ENCODE measurements at regions of chr5 and their contacts with region 1.

Region 1: DNA sequence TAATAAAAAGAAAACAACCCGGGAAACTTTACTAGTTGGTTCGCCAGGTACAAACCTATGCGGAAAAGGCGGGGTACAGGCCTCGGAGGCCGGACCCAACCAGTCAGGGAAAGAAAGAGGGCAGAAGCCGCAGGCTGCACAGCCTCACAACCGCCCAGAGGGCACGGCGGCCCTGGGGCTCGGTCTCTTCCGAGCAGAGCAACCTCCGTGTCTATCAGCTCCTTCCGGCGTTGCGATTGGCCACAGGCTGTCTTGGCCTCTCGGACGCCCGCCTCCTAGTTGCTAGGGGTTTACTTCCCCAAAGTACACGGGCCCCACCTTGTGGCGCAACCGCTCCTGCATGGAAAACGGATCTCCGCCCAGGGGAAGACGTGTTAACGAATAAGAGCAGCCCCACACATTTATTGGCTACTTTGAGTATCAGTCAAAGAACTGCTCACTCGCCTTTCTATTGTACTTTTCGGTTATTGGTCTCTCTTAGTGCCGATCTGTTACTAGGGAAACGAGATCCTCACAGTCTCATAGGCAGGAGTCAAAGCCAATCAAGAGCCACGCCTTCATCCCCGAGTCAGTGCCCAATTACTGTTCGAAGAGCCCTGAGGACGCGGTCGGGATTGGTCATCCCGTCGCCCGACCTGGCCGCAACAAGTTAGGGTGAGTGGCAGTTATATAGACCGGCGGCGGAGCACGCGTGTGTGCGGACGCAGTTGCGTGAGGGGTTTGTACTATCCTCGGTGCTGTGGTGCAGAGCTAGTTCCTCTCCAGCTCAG is at the start of gene G3BP1:
- DNase-seq: peak; percentile 99
- H3K4me3 Mint-ChIP-seq: peak within 1 kb of the TSS; percentile 88
- H3K27ac Mint-ChIP-seq: peak within 1 kb of the TSS; percentile 67
- H3K4me1 Mint-ChIP-seq: peaks cover 37% of the 10 kb centered on the region
- H3K27me3 Mint-ChIP-seq: no peaks in the 10 kb centered on the region
- total RNA-seq, gene G3BP1: 340 and 348 TPM in 2 replicates

Region 2: DNA sequence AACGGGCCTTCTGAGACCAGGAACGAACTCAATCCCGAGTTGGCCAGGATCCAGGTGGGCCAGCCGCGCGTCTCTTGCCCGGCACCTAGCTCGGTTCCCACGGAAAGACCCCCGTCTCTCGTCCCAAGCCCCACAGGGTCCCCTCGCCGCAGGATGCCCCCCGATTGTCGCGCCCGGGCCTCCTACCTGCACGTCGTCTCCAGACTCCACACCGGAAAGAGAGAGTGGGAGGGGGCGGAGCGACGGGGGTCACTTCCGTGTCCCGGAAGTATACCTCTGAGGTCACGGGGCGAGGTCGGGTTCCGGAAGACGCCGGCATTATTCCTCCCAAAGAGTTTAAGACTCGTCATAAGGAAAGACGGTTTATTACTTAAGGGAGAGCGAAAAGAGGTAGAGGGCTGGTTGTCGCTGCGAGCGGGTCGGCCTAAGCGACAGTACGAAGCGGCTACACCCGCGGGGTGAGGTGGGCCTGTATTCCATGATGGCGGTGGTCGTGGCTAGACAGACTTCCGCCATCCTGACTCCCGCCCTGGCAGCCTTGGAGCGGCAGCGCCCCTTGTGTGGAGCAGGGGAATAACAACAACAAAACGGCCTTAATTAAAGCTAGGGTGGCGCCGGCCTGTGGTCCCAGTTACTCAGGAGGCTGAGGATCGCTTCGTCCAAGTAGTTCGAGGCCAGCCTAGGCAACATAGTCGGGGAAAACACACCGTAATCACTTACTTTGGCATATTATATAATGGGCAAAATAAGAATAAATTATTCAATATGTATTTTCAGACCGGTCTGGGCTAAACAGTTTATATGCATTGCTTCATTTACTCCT is 1321.7 kb before region 1 on chr5 and contains the start of gene RPS14:
- intact Hi-C with region 1: loop called (anchors 1 kb)
- DNase-seq: peak; percentile 91
- H3K4me3 Mint-ChIP-seq: peak within 1 kb of the TSS; percentile 92
- H3K27ac Mint-ChIP-seq: peak within 1 kb of the TSS; percentile 100
- H3K4me1 Mint-ChIP-seq: peaks cover 40% of the 10 kb centered on the region
- H3K27me3 Mint-ChIP-seq: peaks cover 2% of the 10 kb centered on the region
- total RNA-seq, gene RPS14: 2,328 and 2,429 TPM in 2 replicates

Region 3: DNA sequence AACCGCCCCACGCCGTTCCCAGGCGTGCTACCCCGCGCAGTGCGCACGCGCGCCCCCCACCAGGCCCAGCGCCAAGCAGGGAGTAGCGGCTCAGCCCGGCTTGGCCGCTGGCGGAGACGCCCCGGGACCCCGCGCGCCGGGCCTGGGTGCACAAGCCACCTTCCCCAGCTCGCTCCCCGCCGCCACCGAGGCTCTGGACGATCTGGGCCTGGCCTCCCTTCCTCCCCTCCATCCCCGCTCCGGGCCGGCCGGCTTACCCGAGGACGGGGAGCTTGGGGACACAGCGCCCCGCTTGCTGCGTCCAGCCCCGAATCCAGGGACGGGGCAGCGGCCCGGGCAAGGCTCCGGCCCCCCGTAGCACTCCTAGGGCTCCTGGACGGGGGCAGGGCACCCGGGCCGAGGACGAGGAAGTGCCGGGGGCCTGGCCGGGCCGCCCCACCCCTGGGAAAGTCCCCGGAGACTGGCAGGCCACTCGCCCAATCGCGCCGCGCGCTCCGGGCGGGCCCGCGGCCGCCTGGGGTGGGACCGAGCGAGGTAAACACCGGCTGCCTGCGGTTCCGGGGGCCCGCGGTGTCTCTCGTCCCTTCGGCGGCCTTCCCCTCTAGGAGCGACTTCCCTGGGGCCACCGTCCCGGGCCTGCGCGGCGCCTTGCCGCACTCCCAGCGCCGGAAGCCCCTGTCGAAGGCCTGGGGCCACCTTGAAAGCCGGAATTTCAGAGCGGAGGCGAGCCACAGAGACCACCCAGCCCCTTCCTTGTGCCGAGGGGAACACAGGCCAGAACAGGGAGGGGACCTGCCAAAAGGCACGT is 690.6 kb before region 1 on chr5 and contains the start of gene TNIP1:
- intact Hi-C with region 1: loop called (anchors 5 kb)
- DNase-seq: peak; percentile 95
- H3K4me3 Mint-ChIP-seq: peak within 1 kb of the TSS; percentile 91
- H3K27ac Mint-ChIP-seq: peak within 1 kb of the TSS; percentile 93
- H3K4me1 Mint-ChIP-seq: peaks cover 85% of the 10 kb centered on the region
- H3K27me3 Mint-ChIP-seq: no peaks in the 10 kb centered on the region
- total RNA-seq, gene TNIP1: 287 and 304 TPM in 2 replicates

Region 4: GRCh38 chr5:151252762-151253604 is 518.5 kb before region 1 on chr5 and contains the start of gene GM2A:
- intact Hi-C with region 1: loop called (anchors 1 kb)
- DNase-seq: peak; percentile 99
- H3K4me3 Mint-ChIP-seq: peak within 1 kb of the TSS; percentile 87
- H3K27ac Mint-ChIP-seq: peak within 1 kb of the TSS; percentile 88
- H3K4me1 Mint-ChIP-seq: peaks cover 44% of the 10 kb centered on the region
- H3K27me3 Mint-ChIP-seq: peaks cover 2% of the 10 kb centered on the region
- total RNA-seq, gene GM2A: 16.9 and 21.1 TPM in 2 replicates

Region 5: DNA sequence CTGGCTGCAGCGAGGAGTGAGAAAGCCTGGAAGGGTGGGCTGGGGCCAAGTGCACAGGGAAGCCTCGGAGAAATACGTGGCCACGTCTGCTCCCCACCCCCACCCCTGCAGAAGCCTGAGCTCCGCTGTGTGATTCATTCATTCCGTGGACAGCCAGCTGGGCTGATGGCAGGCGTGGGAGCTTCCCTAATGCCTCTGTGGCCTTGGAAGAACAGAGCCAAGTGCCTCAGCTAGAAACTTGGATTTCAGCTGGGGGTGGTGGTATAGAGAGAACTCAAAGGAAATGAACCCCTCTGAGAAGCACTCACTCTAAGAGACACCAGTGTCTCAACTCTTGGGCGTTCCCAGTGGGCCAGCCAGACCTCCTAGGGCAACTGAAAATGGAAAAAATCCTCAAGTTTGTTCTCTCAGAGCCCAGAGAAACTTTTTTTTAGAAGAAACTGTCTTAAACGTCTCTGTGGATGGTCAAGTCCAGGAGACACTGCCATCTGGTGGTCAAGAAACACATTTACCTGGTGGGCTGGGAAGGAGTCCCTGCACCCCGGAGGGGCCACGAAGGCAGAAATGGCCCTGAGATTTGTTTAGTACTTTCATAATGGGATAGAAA is 31.0 kb before region 1 on chr5:
- intact Hi-C with region 1: loop called (anchors 2 kb)
- DNase-seq: peak; percentile 37
- H3K4me3 Mint-ChIP-seq: no peak overlapping the region
- H3K27ac Mint-ChIP-seq: no peak overlapping the region
- H3K4me1 Mint-ChIP-seq: peaks cover 23% of the 10 kb centered on the region
- H3K27me3 Mint-ChIP-seq: no peaks in the 10 kb centered on the region

Region 6: GRCh38 chr5:151800532-151800931 is 29.1 kb after region 1 on chr5:
- intact Hi-C with region 1: loop called (anchors 2 kb)
- DNase-seq: no peak
- H3K4me3 Mint-ChIP-seq: no peak overlapping the region
- H3K27ac Mint-ChIP-seq: peak overlapping the region; percentile 67
- H3K4me1 Mint-ChIP-seq: peaks cover 40% of the 10 kb centered on the region
- H3K27me3 Mint-ChIP-seq: no peaks in the 10 kb centered on the region

Measured in activated T-helper 1 cell treated with anti-CD3 and anti-CD28 coated beads, Interleukin-12 subunit alpha, Interleukin-12 subunit beta, Interleukin-2, Interleukin-4 antibody, amounts not matched to agents 30 ng/mL and 10 ng/mL and 1 ng/mL, durations not matched to agents 14 hours and 24 hours and 36 hours (primary cell).